WTC11 (cell line): ENCODE measurements at regions of chr18 and their contacts with region 1.

Region 1: GRCh38 chr18:3771121-3771971 is 321.4 kb downstream of the TGIF1 start:
- DNase-seq: peak; percentile 90
- ATAC-seq: peak; percentile 93
- H3K4me3 Mint-ChIP-seq: peak overlapping the region; percentile 87
- H3K27ac Mint-ChIP-seq: no peak overlapping the region; the same call in 1 of the 2 replicates
- H3K4me1 Mint-ChIP-seq: peaks cover 48% of the 10 kb centered on the region
- H3K27me3 Mint-ChIP-seq: no peaks in the 10 kb centered on the region; the same call in 1 of the 2 replicates
- CTCF ChIP-seq: peak; percentile 96

Region 2: GRCh38 chr18:3593904-3594661 is 177.3 kb before region 1 on chr18:
- CTCF ChIA-PET with region 1: interaction called, 14 read pairs
- POLR2A ChIA-PET with region 1: no interaction called
- DNase-seq: peak; percentile 91
- ATAC-seq: peak; percentile 81
- H3K4me3 Mint-ChIP-seq: peak overlapping the region; percentile 62
- H3K27ac Mint-ChIP-seq: peak overlapping the region; percentile 95
- H3K4me1 Mint-ChIP-seq: peaks cover 81% of the 10 kb centered on the region
- H3K27me3 Mint-ChIP-seq: peaks cover 28% of the 10 kb centered on the region
- CTCF ChIP-seq: peak; percentile 69; the same call in 1 of the 2 replicates

Region 3: GRCh38 chr18:3675446-3675845 is 95.9 kb before region 1 on chr18:
- CTCF ChIA-PET with region 1: no interaction called
- POLR2A ChIA-PET with region 1: no interaction called
- DNase-seq: no peak
- ATAC-seq: no peak
- H3K4me3 Mint-ChIP-seq: no peak overlapping the region
- H3K27ac Mint-ChIP-seq: no peak overlapping the region
- H3K4me1 Mint-ChIP-seq: peaks cover 11% of the 10 kb centered on the region
- H3K27me3 Mint-ChIP-seq: no peaks in the 10 kb centered on the region; the same call in 1 of the 2 replicates
- CTCF ChIP-seq: no peak

Region 4: GRCh38 chr18:3710712-3711269 is 60.6 kb before region 1 on chr18:
- CTCF ChIA-PET with region 1: interaction called, 21 read pairs
- POLR2A ChIA-PET with region 1: no interaction called
- DNase-seq: no peak
- ATAC-seq: no peak
- H3K4me3 Mint-ChIP-seq: no peak overlapping the region
- H3K27ac Mint-ChIP-seq: no peak overlapping the region
- H3K4me1 Mint-ChIP-seq: no peaks in the 10 kb centered on the region; the same call in 1 of the 2 replicates
- H3K27me3 Mint-ChIP-seq: no peaks in the 10 kb centered on the region; the same call in 1 of the 2 replicates
- CTCF ChIP-seq: no peak

Region 5: GRCh38 chr18:3806656-3807055 is 35.3 kb after region 1 on chr18:
- CTCF ChIA-PET with region 1: interaction called, 27 read pairs
- POLR2A ChIA-PET with region 1: no interaction called
- DNase-seq: no peak
- ATAC-seq: peak; percentile 67
- H3K4me3 Mint-ChIP-seq: no peak overlapping the region
- H3K27ac Mint-ChIP-seq: no peak overlapping the region
- H3K4me1 Mint-ChIP-seq: no peaks in the 10 kb centered on the region
- H3K27me3 Mint-ChIP-seq: no peaks in the 10 kb centered on the region
- CTCF ChIP-seq: no peak

Region 6: GRCh38 chr18:3857544-3857943 is 86.2 kb after region 1 on chr18:
- CTCF ChIA-PET with region 1: interaction called, 21 read pairs
- POLR2A ChIA-PET with region 1: no interaction called
- DNase-seq: no peak
- ATAC-seq: no peak
- H3K4me3 Mint-ChIP-seq: no peak overlapping the region
- H3K27ac Mint-ChIP-seq: no peak overlapping the region
- H3K4me1 Mint-ChIP-seq: no peaks in the 10 kb centered on the region
- H3K27me3 Mint-ChIP-seq: no peaks in the 10 kb centered on the region
- CTCF ChIP-seq: no peak

Region 7: GRCh38 chr18:3966985-3967856 is 195.9 kb after region 1 on chr18:
- CTCF ChIA-PET with region 1: interaction called, 55 read pairs
- POLR2A ChIA-PET with region 1: no interaction called
- DNase-seq: peak; percentile 48
- ATAC-seq: peak; percentile 92
- H3K4me3 Mint-ChIP-seq: no peak overlapping the region
- H3K27ac Mint-ChIP-seq: no peak overlapping the region
- H3K4me1 Mint-ChIP-seq: peaks cover 41% of the 10 kb centered on the region
- H3K27me3 Mint-ChIP-seq: no peaks in the 10 kb centered on the region; the same call in 1 of the 2 replicates
- CTCF ChIP-seq: no peak